Common myeloid progenitor, CD34-positive (primary cell): ENCODE measurements at regions of chr10 and their contacts with region 1.

Region 1: GRCh38 chr10:117264782-117265181 is 23.9 kb downstream of the SLC18A2 start:
- DNase-seq: no peak
- H3K4me3 ChIP-seq: no peak overlapping the region
- H3K27ac ChIP-seq: no peak overlapping the region
- H3K4me1 ChIP-seq: peaks cover 0 to 12% (median 5%) of the 10 kb centered on the region in 4 experiments
- H3K27me3 ChIP-seq: no peaks in the 10 kb centered on the region

Region 2: DNA sequence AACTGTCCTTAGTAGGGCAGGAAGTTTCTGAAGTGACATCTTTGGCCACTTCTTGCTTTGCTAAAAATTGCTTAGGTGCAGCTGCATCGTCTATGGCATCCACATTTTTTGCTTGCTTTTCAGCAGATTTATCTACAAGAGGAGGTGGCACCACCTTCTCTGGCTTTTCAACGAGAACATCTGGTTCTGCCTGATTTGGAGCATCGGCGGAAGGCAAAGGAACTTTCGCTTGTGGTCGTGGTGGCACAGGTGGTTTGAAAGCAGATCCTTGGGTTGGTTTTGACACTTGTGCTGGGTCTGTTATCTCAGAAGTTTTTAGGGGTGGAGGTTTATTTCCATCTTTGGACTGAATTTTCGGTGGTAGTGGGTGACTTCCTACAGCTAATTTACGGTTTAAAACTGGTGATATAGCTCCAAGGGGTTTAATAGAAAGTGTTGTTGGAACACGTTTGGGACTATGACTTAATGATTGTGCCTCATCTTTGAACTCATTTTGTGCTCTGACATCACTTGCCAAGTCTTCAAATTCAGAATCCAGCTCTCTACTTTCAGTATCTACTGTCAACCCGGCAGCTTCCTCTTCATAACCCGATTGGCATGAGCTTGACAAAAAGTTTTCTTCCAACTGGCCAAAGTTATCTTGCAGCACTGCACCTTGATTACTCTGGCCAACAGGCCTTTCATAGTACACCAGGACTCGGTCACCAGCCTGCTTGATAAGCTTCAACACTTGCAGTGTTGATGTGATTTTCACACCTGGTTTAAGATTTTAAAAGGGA is 20.1 kb after region 1 on chr10:
- CTCF ChIA-PET with region 1: interaction called, 12 read pairs
- POLR2A ChIA-PET with region 1: no interaction called
- DNase-seq: peak in 2 of 3 donors; percentile 40 to 61
- H3K4me3 ChIP-seq: no peak overlapping the region
- H3K27ac ChIP-seq: no peak overlapping the region
- H3K4me1 ChIP-seq: no peaks in the 10 kb centered on the region
- H3K27me3 ChIP-seq: no peaks in the 10 kb centered on the region

Region 3: DNA sequence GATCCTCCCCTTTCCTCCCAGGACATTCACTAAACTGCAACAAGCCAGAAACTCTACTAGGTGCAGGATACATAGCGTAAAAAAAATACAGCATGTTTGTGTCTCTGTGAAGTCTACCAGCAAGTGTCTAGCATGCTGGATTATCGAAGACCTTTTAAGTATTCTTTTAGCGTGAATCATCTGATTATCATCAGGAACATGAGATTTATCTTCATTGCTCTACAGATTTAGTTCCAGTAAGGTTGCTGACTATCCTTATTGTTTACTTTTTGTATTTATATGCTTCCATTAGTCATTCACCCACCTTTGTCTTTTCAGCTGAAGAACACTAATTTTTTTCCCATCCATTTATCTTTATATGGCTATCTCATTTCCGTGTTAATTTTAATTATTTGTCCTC is 47.6 kb after region 1 on chr10:
- CTCF ChIA-PET with region 1: no interaction called
- POLR2A ChIA-PET with region 1: no interaction called
- DNase-seq: no peak
- H3K4me3 ChIP-seq: no peak overlapping the region
- H3K27ac ChIP-seq: no peak overlapping the region
- H3K4me1 ChIP-seq: no peaks in the 10 kb centered on the region
- H3K27me3 ChIP-seq: no peaks in the 10 kb centered on the region